Spleen (tissue), 13 donors: ENCODE measurements at regions of chrX and their contacts with region 1.

Region 1: GRCh38 chrX:120499301-120500072 is 30.4 kb upstream of the LAMP2 start:
- DNase-seq: no peak
- H3K4me3 ChIP-seq: no peak overlapping the region
- H3K27ac ChIP-seq: no peak overlapping the region
- H3K4me1 ChIP-seq: peaks cover 0 to 10% (median 0%) of the 10 kb centered on the region in 6 donors
- H3K27me3 ChIP-seq: no peaks in the 10 kb centered on the region
- CTCF ChIP-seq: no peak
- POLR2A ChIP-seq: no peak

Region 2: DNA sequence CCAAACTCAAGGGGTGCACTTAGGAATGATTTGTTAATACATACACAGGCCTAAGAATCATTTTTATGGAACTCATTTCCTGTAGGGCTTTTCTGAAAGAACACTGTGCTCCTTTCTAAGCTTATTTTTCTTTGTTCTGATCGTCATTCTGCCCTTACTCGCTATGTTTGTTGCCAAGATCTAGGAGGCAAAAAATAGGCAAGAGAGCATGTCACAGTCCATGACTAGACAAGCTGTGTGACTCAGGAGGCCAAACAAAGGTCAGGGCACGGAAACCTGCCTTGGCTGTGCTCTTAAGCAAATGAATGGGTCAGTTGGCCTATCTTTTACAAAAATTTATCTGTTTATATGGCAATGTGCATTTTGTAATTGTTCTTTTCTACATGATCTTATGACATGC is 172.9 kb after region 1 on chrX:
- intact Hi-C with region 1: loop called (anchors 10 kb)
- DNase-seq: no peak
- H3K4me3 ChIP-seq: no peak overlapping the region
- H3K27ac ChIP-seq: no peak overlapping the region
- H3K4me1 ChIP-seq: no peaks in the 10 kb centered on the region
- H3K27me3 ChIP-seq: no peaks in the 10 kb centered on the region
- CTCF ChIP-seq: no peak
- POLR2A ChIP-seq: no peak

Region 3: GRCh38 chrX:120769576-120770341 is 270.3 kb after region 1 on chrX:
- intact Hi-C with region 1: loop called (anchors 10 kb)
- DNase-seq: no peak
- H3K4me3 ChIP-seq: no peak overlapping the region
- H3K27ac ChIP-seq: no peak overlapping the region
- H3K4me1 ChIP-seq: peaks cover 0 to 4% (median 0%) of the 10 kb centered on the region in 6 donors
- H3K27me3 ChIP-seq: no peaks in the 10 kb centered on the region
- CTCF ChIP-seq: peak in 6 of 11 experiments; percentile 18 to 36 (median 30)
- POLR2A ChIP-seq: no peak